Endothelial cell of umbilical vein (primary cell): ENCODE measurements at regions of chr2 and their contacts with region 1.

Region 1: GRCh38 chr2:99489761-99490622 is at the start of gene REV1:
- DNase-seq: peak; percentile 95
- H3K4me3 ChIP-seq: peak within 1 kb of the TSS; percentile 85 to 96 (median 90)
- H3K27ac ChIP-seq: peak within 1 kb of the TSS; percentile 94
- H3K4me1 ChIP-seq: peaks cover 27% of the 10 kb centered on the region
- H3K27me3 ChIP-seq: peaks cover 3 to 6% of the 10 kb centered on the region in 2 experiments
- CTCF ChIP-seq: peak; percentile 45 to 60
- POLR2A ChIP-seq: peak; percentile 76
- total RNA-seq, gene REV1: 40.8 and 50.3 TPM in 2 replicates

Region 2: GRCh38 chr2:99066075-99066958 is 423.7 kb before region 1 on chr2:
- CTCF ChIA-PET with region 1: no interaction called
- POLR2A ChIA-PET with region 1: no interaction called
- dilution Hi-C with region 1: no loop called
- intact Hi-C with region 1: loop called (anchors 1 kb)
- DNase-seq: peak; percentile 68
- H3K4me3 ChIP-seq: peak overlapping the region in 1 of 3 experiments; percentile 26
- H3K27ac ChIP-seq: no peak overlapping the region
- H3K4me1 ChIP-seq: peaks cover 20% of the 10 kb centered on the region
- H3K27me3 ChIP-seq: no peaks in the 10 kb centered on the region
- CTCF ChIP-seq: peak; percentile 39 to 61
- POLR2A ChIP-seq: no peak

Region 3: GRCh38 chr2:99180755-99181623 is 309.0 kb before region 1 on chr2 and contains the starts of genes MITD1 and MRPL30:
- CTCF ChIA-PET with region 1: no interaction called
- POLR2A ChIA-PET with region 1: no interaction called
- dilution Hi-C with region 1: no loop called
- intact Hi-C with region 1: loop called (anchors 1 kb)
- DNase-seq: peak; percentile 99
- H3K4me3 ChIP-seq: peak within 1 kb of the TSS; percentile 67 to 93 (median 74)
- H3K27ac ChIP-seq: peak within 1 kb of the TSS; percentile 48
- H3K4me1 ChIP-seq: peaks cover 17% of the 10 kb centered on the region
- H3K27me3 ChIP-seq: no peaks in the 10 kb centered on the region
- CTCF ChIP-seq: no peak
- POLR2A ChIP-seq: peak; percentile 80
- total RNA-seq, gene MITD1: 29.8 and 30.0 TPM in 2 replicates
- total RNA-seq, gene MRPL30: 28.4 and 30.7 TPM in 2 replicates

Region 4: GRCh38 chr2:99404795-99405669 is 85.0 kb before region 1 on chr2:
- CTCF ChIA-PET with region 1: interaction called, 8 read pairs
- POLR2A ChIA-PET with region 1: no interaction called
- dilution Hi-C with region 1: no loop called
- intact Hi-C with region 1: loop called (anchors 5 kb)
- DNase-seq: no peak
- H3K4me3 ChIP-seq: no peak overlapping the region
- H3K27ac ChIP-seq: no peak overlapping the region
- H3K4me1 ChIP-seq: no peaks in the 10 kb centered on the region
- H3K27me3 ChIP-seq: no peaks in the 10 kb centered on the region
- CTCF ChIP-seq: no peak
- POLR2A ChIP-seq: peak; percentile 36

Region 5: GRCh38 chr2:99442837-99443236 is 47.2 kb before region 1 on chr2:
- CTCF ChIA-PET with region 1: no interaction called
- POLR2A ChIA-PET with region 1: no interaction called
- dilution Hi-C with region 1: no loop called
- intact Hi-C with region 1: loop called (anchors 1 kb)
- DNase-seq: peak; percentile 14
- H3K4me3 ChIP-seq: no peak overlapping the region
- H3K27ac ChIP-seq: no peak overlapping the region
- H3K4me1 ChIP-seq: no peaks in the 10 kb centered on the region
- H3K27me3 ChIP-seq: no peaks in the 10 kb centered on the region
- CTCF ChIP-seq: no peak
- POLR2A ChIP-seq: no peak

Region 6: DNA sequence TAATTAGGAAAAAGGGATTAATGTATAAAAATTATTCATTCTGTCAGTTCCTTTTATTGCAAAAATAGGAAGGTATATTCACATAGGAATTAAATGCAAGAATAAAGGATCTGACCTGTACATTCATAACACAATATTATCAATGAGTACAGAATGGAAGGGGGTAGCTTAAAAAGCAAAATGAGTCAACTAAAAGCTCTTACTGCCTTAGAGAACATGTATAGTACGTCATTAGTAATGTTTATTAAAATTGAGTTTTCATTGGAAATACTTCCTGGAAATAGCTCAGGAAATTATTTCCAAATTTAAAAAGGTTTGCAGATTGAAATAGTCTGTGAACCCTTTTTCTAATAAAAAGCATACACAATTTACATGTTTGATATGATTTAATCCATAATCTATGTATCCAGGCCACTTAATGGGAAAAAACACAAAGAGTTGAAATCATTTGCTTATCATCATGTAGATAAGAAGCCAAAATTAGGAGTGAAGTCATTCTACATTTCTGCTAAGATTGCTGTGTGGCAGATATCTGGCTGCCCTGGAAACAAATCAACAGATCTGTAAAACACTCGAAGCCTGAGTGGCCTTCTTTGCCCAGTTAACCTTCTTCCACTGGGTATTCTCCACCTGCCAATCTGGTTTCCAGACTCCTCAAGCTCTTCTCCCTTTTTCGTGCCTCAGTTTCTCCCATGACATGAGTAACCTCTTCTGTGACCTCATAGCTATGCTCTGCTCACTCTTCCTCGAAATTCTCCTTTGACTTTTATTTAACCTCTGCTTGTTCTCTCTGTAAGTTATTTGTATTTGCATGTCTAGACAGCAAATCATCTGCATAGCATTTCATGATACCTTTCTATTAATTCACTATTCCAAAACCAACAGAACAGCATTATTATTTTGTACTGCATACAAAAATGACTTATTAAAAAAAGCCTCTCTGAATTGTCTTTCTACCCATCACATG is 181.1 kb after region 1 on chr2:
- CTCF ChIA-PET with region 1: no interaction called
- POLR2A ChIA-PET with region 1: no interaction called
- dilution Hi-C with region 1: no loop called
- intact Hi-C with region 1: no loop called
- DNase-seq: no peak
- H3K4me3 ChIP-seq: no peak overlapping the region
- H3K27ac ChIP-seq: no peak overlapping the region
- H3K4me1 ChIP-seq: no peaks in the 10 kb centered on the region
- H3K27me3 ChIP-seq: no peaks in the 10 kb centered on the region
- CTCF ChIP-seq: no peak
- POLR2A ChIP-seq: no peak